Spleen (tissue), 13 donors: ENCODE measurements at regions of chr17 and their contacts with region 1.

Region 1: GRCh38 chr17:78497115-78497540 is 80.1 kb downstream of the DNAH17 start:
- DNase-seq: peak; percentile 87
- H3K4me3 ChIP-seq: no peak overlapping the region
- H3K27ac ChIP-seq: no peak overlapping the region
- H3K4me1 ChIP-seq: peaks cover 0 to 16% (median 4%) of the 10 kb centered on the region in 6 donors
- H3K27me3 ChIP-seq: peaks cover 0 to 19% (median 0%) of the 10 kb centered on the region in 7 donors
- CTCF ChIP-seq: peak; percentile 45 to 84 (median 67)
- POLR2A ChIP-seq: no peak

Region 2: DNA sequence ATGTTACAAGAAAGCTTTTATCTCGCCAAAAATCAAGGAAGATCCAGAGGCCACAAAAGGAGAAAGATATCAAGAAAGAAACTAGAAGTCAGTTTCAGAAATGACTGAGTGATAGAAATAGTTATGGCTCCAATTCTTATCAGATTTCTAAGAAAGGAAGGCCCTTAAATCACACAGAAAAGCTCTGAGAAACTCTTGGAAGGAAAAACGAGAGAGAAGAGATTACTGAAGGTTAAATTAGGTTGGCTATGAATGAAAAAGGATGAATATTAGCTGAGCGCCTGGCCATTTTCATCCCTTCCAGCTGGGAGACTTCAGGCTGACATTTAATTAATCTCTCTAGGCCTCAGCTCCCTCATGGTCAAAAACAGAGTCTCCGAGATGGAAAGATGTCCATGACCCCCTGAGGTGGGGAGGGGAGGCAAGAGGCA is 212.6 kb after region 1 on chr17:
- intact Hi-C with region 1: loop called (anchors 2 kb)
- DNase-seq: no peak
- H3K4me3 ChIP-seq: no peak overlapping the region
- H3K27ac ChIP-seq: peak overlapping the region in 6 of 8 donors; percentile 6 to 69 (median 50)
- H3K4me1 ChIP-seq: peaks cover 30 to 99% (median 69%) of the 10 kb centered on the region in 6 donors
- H3K27me3 ChIP-seq: no peaks in the 10 kb centered on the region
- CTCF ChIP-seq: no peak
- POLR2A ChIP-seq: no peak

Region 3: DNA sequence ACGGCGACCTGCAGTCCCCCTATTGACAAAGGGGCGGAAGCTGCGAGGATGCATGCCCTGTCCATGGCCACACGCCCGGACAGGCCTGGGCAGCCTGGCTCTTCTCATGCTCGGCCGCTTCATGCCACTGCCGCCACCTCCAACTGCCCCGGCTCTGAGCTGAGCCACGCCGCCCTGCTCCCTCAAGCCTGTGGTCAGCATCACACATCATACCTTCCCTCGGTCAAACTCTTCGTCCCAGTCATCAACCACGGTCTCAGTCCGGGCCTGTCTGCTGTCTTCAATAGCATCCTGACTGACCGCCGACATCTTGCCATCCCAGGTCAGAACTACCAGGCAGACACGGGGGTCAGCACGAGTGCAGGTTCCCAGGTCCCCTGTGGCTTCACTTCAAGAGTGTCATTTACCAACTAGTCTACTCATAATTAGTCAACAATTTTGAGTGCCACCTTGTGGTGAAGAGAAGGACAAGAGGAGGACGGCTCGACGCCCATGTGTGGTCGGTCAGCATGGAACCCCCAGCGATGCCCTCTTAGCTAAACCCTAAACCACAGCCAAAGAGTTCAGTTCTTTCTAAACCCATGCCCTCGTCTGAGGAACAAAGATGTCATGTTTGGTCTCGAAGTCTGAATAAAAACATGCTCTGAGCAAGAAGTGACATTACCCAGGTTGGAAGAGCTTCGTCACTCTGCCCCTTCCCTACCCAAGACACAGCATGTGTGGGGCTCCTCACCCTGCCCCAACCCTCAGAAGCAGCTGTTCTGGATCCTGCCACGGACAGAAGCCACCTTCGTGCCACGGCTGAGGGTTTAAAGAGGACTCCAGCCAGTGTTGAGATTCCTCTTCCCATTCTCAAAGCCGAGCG is 301.8 kb after region 1 on chr17:
- intact Hi-C with region 1: loop called (anchors 5 kb)
- DNase-seq: no peak
- H3K4me3 ChIP-seq: no peak overlapping the region
- H3K27ac ChIP-seq: peak overlapping the region in 1 of 8 donors; percentile 21
- H3K4me1 ChIP-seq: peaks cover 7 to 51% (median 20%) of the 10 kb centered on the region in 6 donors
- H3K27me3 ChIP-seq: no peaks in the 10 kb centered on the region
- CTCF ChIP-seq: peak; percentile 28 to 69 (median 52)
- POLR2A ChIP-seq: no peak